AG04449 (cell line): ENCODE measurements at regions of chr4 and their contacts with region 1.

Region 1: GRCh38 chr4:80184053-80184790 is 13.1 kb upstream of the PRDM8 start:
- DNase-seq: no peak
- H3K4me3 ChIP-seq: peak overlapping the region; percentile 90
- CTCF ChIP-seq: peak; percentile 97

Region 2: DNA sequence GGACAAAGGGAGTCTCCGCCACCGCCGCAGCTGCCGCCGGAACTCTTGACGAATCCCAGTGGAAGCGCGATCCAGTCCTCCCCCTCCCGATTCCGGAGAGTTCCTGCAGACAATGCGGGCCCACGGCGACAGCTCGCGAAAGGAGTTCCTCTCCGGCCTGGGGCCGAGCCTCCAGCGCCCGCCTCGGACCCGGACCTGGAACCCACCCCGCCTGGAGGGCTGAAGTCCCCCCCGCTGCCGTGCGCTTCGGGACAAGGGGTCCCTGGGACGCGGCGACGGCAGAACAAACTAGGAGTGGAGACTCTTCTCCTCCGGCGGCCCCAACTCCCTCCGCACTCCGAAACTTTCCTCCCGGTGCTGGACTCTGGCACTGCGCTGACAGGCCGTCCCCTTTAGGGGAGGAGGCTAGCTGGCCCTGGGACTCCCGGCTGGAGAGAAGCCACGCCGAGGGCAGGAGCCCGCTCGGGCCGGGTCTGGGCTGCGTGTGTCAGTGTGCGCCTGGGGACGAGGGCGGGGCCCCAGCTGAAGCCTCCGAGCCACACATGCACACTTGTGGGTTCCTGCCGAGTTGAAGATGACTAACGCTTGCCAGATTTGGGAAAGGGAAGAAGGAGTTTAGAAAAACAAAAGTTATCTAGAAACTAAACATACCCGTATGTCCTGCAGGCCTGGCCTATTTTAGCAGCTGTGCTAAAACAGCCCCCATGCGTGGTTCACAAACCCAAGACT is 111.3 kb before region 1 on chr4 and contains the start of gene ANTXR2:
- CTCF ChIA-PET with region 1: interaction called, 19 read pairs
- POLR2A ChIA-PET with region 1: interaction called, 10 read pairs
- DNase-seq: peak; percentile 81
- H3K4me3 ChIP-seq: peak within 1 kb of the TSS; percentile 82
- CTCF ChIP-seq: no peak

Region 3: GRCh38 chr4:80153874-80154544 is 30.2 kb before region 1 on chr4:
- CTCF ChIA-PET with region 1: interaction called, 42 read pairs
- POLR2A ChIA-PET with region 1: no interaction called
- DNase-seq: no peak
- H3K4me3 ChIP-seq: no peak overlapping the region
- CTCF ChIP-seq: no peak

Region 4: DNA sequence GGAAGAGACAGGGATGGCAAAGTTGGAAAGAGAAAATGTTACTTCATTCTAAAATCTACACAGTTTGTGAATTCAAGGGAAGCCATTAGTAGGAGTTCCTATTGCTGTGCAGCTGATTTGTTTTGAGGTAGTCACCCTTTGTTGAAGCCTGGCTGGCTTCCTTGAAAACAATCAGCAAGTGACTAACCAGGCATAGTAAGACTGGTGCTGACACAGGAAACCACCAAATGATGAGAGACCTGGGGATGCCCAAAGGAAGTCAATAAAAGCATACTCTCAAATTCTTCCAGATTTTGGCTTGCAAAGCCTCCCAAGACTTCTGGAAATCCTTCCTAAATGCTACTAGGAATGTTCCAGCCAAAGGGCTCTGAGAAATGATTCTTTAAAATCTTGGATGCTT is 10.8 kb before region 1 on chr4:
- CTCF ChIA-PET with region 1: interaction called, 70 read pairs
- POLR2A ChIA-PET with region 1: no interaction called
- DNase-seq: peak; percentile 44
- H3K4me3 ChIP-seq: no peak overlapping the region
- CTCF ChIP-seq: no peak

Region 5: GRCh38 chr4:80202190-80202711 is 18.0 kb after region 1 on chr4:
- CTCF ChIA-PET with region 1: interaction called, 100 read pairs
- POLR2A ChIA-PET with region 1: interaction called, 4 read pairs
- DNase-seq: no peak
- H3K4me3 ChIP-seq: peak overlapping the region; percentile 63
- CTCF ChIP-seq: peak; percentile 88

Region 6: DNA sequence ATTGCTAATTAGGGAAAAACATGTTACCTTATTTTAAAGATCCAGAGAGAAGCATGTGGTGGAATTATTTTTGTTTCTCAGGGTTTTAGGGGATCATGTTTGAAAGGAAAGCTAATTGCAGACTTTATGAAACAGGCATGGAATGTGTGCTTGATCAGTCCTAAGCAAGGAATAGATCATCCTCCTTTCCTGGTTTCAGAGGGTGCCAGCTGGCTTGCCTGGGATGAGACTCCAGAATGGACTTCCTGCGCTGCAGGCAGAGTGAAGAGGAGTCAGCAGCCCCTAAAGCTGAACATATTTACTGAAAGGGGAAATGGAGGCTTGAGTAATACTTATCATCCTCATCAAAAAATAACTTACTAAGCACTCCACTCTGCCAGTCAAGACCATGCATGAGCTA is 95.5 kb after region 1 on chr4:
- CTCF ChIA-PET with region 1: no interaction called
- POLR2A ChIA-PET with region 1: no interaction called
- DNase-seq: no peak
- H3K4me3 ChIP-seq: no peak overlapping the region
- CTCF ChIP-seq: no peak

Region 7: DNA sequence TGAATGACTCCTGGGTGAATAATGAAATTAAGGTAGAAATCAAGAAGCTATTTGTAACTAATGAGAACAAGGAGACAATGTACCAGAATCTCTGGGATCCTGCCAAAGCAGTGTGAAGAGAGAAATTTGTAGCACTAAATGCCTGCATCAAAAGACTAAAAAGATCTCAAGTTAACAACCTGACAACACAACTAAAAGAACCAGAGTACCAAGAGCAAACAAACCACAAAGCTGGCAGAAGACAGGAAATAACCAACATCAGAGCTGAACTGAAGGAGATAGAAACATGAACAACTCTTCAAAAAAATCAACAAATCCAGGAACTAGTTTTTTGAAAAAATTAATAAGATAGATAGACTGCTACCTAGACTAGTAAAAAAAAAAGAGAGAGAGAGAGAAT is 159.7 kb after region 1 on chr4:
- CTCF ChIA-PET with region 1: no interaction called
- POLR2A ChIA-PET with region 1: no interaction called
- DNase-seq: no peak
- H3K4me3 ChIP-seq: no peak overlapping the region
- CTCF ChIP-seq: no peak